ENCODE measurements at regions of chr1 and their contacts with region 1.

Region 1: DNA sequence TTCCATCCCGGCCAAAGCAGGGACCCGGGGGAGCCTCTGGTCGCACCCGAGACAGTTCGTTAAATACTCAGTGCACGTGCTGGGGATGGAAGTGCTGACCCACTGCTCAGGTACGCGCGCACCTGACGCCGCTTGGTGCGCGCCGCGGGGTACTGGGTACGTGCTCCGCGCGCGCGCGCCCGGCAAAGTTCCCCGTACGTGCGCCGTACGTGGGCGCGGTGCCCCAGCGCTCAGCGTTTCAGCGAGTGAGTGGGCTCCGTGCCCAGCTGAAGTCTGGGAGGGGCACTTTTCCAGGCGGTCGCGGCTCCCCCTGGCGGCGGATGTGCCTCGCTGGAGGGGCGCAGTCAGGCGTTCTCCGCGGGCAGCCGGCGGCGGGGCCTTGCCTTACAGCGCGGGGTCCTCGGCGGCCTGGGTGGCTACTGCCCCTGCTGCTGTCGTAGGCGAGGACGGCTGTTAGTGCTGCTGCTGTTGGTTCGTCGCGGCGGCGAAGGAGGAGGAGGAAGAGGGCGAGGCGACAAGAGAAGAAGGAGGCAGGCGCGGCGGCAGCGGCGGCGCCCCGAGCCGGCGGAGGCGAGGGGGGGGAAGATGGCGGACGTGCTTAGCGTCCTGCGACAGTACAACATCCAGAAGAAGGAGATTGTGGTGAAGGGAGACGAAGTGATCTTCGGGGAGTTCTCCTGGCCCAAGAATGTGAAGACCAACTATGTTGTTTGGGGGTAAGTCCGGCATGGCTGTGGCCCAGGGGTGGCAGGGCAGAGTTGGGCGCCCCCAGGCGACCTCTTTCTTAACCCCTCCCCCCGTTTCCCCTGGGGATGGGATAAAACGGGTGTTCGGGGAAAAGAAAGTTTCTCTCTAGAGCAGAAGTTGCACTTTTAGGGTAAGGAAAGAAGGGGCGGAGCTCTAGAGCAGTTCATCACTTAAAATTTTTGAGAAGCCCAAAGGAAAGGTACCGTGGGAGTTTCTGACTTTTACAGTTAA is at the start of gene CDC73:
- DNase-seq: peak; percentile 96 to 99 (median 99)
- H3K4me3 ChIP-seq: peak within 1 kb of the TSS; percentile 93
- H3K27ac ChIP-seq: peak within 1 kb of the TSS; percentile 82 to 87
- H3K4me1 ChIP-seq: no peaks in the 10 kb centered on the region
- H3K27me3 ChIP-seq: no peaks in the 10 kb centered on the region
- CTCF ChIP-seq: peak; percentile 97 to 99 (median 99)
- EP300 ChIP-seq: no peak
- POLR2A ChIP-seq: peak; percentile 63
- total RNA-seq, gene CDC73: 34.8 to 59.2 (median 56.5) TPM

Region 2: DNA sequence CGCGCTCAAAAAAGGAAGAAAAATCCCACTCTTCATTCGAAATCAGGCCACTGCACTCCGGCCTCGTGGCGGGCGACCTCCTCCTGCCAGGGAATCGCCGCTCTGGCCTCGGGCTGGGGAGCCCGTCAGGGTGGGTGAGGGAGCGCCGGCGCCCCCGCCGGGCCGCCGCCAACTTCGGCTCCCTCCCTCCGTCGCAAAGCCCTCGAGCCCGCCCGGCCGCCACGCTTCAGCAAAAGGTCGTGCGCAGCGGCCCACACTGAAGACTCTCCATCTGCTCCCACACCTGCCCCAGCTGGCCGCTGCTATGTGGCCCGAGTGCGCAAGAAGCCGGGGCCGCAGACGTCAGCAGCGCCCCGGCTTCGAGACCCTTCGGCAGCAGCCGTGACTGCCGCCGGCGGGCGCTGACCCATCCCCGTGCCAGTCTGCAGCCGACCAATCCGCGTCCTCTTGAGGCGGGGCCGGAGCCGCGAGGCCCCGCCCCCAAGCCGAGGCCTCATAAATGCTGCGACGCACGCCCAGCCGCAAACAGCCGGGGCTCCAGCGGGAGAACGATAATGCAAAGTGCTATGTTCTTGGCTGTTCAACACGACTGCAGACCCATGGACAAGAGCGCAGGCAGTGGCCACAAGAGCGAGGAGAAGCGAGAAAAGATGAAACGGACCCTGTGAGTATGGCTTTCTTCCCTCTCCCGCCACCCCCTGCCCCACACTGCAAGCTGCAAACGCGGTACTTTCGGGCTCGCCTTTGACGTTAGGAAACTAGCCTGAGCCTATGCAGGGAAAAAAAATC is 313.2 kb before region 1 on chr1 and contains the start of gene RGS2:
- intact Hi-C with region 1: loop called in 1 of 4 experiments (anchors 5 kb)
- DNase-seq: peak; percentile 92 to 96 (median 94)
- H3K4me3 ChIP-seq: peak within 1 kb of the TSS; percentile 55
- H3K27ac ChIP-seq: peak within 1 kb of the TSS; percentile 66 to 85
- H3K4me1 ChIP-seq: no peaks in the 10 kb centered on the region
- H3K27me3 ChIP-seq: no peaks in the 10 kb centered on the region
- CTCF ChIP-seq: no peak
- EP300 ChIP-seq: no peak
- POLR2A ChIP-seq: peak; percentile 99
- total RNA-seq, gene RGS2: 31.0 to 247 (median 53.6) TPM

Region 3: GRCh38 chr1:193059268-193060225 is 62.4 kb before region 1 on chr1 and contains the starts of genes RO60 and UCHL5:
- intact Hi-C with region 1: loop called in 2 of 4 experiments (anchors 5 to 10 kb)
- DNase-seq: peak; percentile 95 to 96 (median 96)
- H3K4me3 ChIP-seq: peak within 1 kb of the TSS; percentile 58
- H3K27ac ChIP-seq: peak within 1 kb of the TSS; percentile 81 to 96
- H3K4me1 ChIP-seq: peaks cover 6% of the 10 kb centered on the region
- H3K27me3 ChIP-seq: no peaks in the 10 kb centered on the region
- CTCF ChIP-seq: peak in 1 of 3 donors; percentile 12
- EP300 ChIP-seq: no peak
- POLR2A ChIP-seq: peak; percentile 81
- total RNA-seq, gene RO60: 85.7 to 114 (median 99.6) TPM
- total RNA-seq, gene UCHL5: 19.7 to 29.3 (median 23.6) TPM

Region 4: DNA sequence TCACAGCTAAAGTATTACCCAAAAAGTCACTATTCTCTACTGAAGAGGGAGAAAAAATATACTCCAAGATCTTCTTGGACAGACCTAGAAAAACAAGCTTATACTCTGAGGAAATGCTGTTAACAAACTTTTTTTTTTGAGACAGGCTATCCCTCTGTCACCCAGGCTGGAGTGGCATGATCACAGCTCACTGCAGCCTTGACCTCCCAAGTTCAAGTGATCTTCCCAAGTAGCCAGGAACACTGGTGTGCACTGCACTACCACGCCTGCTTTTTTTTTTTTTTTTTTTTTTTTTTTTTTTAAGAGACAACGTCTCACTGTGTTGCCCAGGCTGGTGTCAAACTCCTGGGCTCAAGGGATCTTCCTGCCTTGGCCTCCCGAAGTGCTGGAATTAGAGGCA is 34.0 kb before region 1 on chr1:
- intact Hi-C with region 1: no loop called
- DNase-seq: no peak
- H3K4me3 ChIP-seq: no peak overlapping the region
- H3K27ac ChIP-seq: no peak overlapping the region
- H3K4me1 ChIP-seq: peaks cover 2% of the 10 kb centered on the region
- H3K27me3 ChIP-seq: no peaks in the 10 kb centered on the region
- CTCF ChIP-seq: no peak
- EP300 ChIP-seq: no peak
- POLR2A ChIP-seq: no peak

Region 5: DNA sequence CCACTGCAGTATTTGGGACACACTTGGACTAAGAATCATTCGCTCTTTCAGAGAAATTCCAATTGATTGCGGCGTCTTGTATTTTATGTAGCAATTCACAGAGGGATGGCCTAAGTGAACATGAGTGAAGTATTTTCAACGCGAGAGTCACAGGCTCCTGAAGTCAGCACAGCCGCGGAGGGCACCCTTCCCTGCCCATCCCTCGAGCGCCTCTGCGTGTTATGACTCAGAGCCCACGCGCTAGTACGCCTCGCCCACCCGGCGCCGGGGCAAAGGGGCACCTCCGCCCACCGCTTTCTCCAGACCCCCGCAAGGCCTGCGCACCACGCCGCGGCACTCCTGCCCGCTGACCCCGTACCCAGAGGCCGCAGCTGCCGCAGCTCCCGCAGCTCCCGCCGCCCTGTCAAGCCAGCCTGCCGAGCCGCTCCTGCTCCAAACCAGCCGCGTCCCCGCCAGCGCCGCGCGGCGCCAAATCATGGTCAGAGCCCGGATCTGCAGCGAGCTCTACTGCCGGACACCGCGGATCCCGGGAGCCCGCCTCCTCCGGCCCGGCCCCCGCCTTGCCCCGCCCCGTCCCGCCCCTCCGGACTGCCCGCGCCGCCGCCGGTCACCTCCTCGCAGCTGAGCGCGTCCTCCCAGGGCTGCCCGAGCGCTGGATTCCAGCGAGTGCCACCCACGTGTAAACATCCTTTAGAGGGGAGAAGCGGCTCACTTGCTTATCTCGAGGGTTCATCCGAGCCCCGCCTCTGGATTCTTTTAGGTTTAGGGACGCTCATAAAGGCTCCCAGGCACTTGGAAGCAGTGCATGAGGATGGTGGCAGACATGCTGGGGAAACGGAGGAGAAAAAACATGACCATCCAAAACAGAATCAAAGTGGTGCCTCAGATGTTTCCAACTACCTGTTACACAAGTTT is 16.7 kb before region 1 on chr1 and contains the start of gene GLRX2:
- intact Hi-C with region 1: loop called in 1 of 4 experiments (anchors 2 kb)
- DNase-seq: peak; percentile 82 to 89 (median 86)
- H3K4me3 ChIP-seq: peak within 1 kb of the TSS; percentile 74
- H3K27ac ChIP-seq: peak within 1 kb of the TSS; percentile 70 to 88
- H3K4me1 ChIP-seq: peaks cover 2% of the 10 kb centered on the region
- H3K27me3 ChIP-seq: no peaks in the 10 kb centered on the region
- CTCF ChIP-seq: peak in 2 of 3 donors; percentile 15 to 24
- EP300 ChIP-seq: no peak
- POLR2A ChIP-seq: peak; percentile 29
- total RNA-seq, gene GLRX2: 3.2 to 14.6 (median 9.1) TPM

Measured in ovary (tissue), 10 donors.